Vagina (tissue), 2 donors: ENCODE measurements at regions of chr19 and their contacts with region 1.

Region 1: DNA sequence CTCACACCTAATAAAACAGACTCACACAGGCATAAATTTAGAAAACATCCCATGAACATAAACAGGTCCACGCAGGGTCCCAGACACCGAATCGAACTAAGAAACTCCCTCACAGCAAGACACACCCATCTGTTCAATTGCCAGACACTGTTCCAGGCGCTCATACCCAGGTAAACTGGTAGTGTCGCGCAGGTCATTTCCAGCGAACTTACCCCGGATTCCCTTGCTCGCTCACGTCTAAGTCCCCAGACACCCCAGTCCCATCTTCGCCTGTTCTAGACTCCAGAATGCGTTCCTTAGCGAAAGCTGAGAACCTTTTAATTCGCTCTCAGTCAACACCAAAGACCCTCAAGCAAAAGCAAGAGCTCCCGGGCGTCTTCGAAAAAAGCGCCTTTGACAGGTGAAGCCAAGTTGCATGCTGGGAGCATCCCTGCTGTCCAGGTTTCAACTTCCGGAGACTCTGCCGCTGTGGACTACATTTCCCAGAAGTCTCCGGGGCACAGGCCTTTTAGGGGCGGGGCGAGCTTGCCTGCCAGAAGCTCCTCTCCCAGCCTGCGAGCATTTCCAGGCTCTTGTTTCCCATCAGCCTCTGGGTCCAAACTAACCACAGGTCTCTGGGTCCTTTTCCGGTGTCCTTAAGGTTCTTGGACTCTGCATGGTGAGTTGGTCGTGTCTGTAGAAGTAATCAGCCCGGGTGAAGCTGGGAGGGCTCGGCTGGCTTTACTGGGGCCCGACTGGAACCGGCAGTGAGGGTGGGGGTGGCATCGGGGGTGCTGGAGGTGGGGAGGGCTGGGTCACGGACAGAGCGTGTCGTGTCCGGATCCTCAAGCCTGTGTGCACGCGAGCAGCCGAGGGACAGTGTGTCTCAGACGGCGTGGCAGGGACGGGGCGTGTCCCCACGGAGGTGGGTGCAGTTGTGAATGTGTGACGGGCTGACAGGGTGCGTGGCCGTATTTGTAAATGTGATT is at the start of gene ZNF283:
- DNase-seq: no peak
- H3K4me3 ChIP-seq: peak within 1 kb of the TSS; percentile 75 to 85
- H3K27ac ChIP-seq: peak within 1 kb of the TSS; percentile 76
- H3K4me1 ChIP-seq: peaks cover 7% of the 10 kb centered on the region
- H3K27me3 ChIP-seq: no peaks in the 10 kb centered on the region
- CTCF ChIP-seq: no peak
- POLR2A ChIP-seq: no peak
- total RNA-seq, gene ZNF283: 7.9 TPM

Region 2: DNA sequence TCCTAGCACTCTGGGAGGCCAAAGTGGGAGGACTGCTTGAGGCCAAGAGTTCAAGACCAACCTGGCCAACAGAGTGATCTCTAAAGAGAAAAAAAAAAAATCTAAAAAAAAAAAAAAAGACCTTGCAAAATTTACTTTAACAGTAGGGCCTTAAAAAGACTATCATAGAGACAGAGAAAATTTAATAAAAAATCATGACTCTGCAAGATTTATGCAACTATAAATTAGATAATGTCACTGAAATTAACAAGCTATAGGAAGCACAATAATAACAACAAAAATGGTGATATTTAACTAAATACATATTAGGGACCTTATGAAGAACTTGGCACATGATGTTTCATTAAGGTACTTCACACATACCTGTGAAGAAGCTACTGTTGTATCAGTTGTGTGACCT is 96.8 kb after region 1 on chr19:
- intact Hi-C with region 1: no loop called
- DNase-seq: no peak
- H3K4me3 ChIP-seq: no peak overlapping the region
- H3K27ac ChIP-seq: no peak overlapping the region
- H3K4me1 ChIP-seq: no peaks in the 10 kb centered on the region
- H3K27me3 ChIP-seq: no peaks in the 10 kb centered on the region
- CTCF ChIP-seq: no peak
- POLR2A ChIP-seq: no peak

Region 3: GRCh38 chr19:43934985-43935708 is 108.1 kb after region 1 on chr19 and contains the start of gene ZNF45:
- intact Hi-C with region 1: loop called (anchors 10 kb)
- DNase-seq: peak in 1 of 2 donors; percentile 90
- H3K4me3 ChIP-seq: peak within 1 kb of the TSS; percentile 73 to 74
- H3K27ac ChIP-seq: peak within 1 kb of the TSS; percentile 82
- H3K4me1 ChIP-seq: peaks cover 20% of the 10 kb centered on the region
- H3K27me3 ChIP-seq: no peaks in the 10 kb centered on the region
- CTCF ChIP-seq: no peak
- POLR2A ChIP-seq: no peak
- total RNA-seq, gene ZNF45: 8.8 TPM